CD8-positive, alpha-beta T cell (primary cell): ENCODE measurements at regions of chr19 and their contacts with region 1.

Region 1: GRCh38 chr19:29610563-29611271 is 4.6 kb downstream of the POP4 start:
- DNase-seq: peak; percentile 77 to 92 (median 86)
- ATAC-seq: peak; percentile 58
- H3K4me3 ChIP-seq: peak overlapping the region in 1 of 2 experiments; percentile 20
- H3K4me3 Mint-ChIP-seq: no peak overlapping the region
- H3K27ac ChIP-seq: peak overlapping the region in 1 of 2 experiments; percentile 62
- H3K27ac Mint-ChIP-seq: peak overlapping the region; percentile 42
- H3K4me1 ChIP-seq: peaks cover 19% of the 10 kb centered on the region
- H3K4me1 Mint-ChIP-seq: peaks cover 28% of the 10 kb centered on the region
- H3K27me3 ChIP-seq: no peaks in the 10 kb centered on the region
- H3K27me3 Mint-ChIP-seq: no peaks in the 10 kb centered on the region
- CTCF ChIP-seq: peak; percentile 88

Region 2: DNA sequence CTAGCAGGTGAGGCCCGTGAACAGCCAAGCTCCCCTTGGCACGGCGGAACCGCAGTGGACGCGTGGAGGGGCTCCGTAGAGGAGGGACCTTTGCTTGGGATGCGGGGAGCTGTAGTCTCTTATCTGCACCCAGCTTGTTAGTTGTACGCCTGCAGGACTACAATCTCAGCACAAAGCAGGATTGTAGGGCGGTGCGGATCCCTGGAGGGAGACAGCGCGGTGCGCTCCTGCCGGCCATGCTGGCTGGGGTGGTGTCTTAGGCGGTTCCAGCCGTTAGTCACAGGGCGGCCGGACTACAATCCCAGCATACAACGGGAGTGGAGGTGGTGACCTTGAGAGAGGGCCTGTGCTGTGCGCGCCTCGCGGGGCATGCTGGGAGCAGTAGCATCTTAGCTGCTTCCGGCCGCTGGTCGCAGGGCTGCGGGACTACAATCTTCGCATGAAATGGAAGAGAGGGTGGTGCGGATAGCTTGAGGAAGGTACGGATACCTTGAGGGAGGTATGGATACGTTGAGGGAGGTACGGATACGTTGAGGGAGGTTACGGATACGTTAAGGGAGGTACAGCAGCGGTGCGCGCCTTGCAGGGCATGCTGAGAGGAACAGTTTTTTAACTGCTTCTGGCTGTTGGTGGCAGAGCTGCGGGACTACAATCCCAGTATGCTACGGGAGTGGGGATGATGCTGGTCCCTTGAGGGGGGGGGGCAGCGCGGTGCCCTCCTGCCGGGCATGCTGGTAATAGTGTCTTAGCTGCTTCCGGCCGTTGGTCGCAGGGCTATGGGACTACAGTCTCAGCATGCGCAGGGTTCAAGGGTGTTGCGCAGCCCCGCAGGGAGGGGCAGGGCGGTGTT is 1816.8 kb before region 1 on chr19:
- CTCF ChIA-PET with region 1: no interaction called
- POLR2A ChIA-PET with region 1: interaction called, 4 read pairs
- intact Hi-C with region 1: loop called in 1 of 2 experiments (anchors 5 kb)
- DNase-seq: peak; percentile 77 to 95 (median 91)
- ATAC-seq: peak; percentile 90
- H3K4me3 ChIP-seq: peak overlapping the region; percentile 71 to 75
- H3K4me3 Mint-ChIP-seq: peak overlapping the region; percentile 93
- H3K27ac ChIP-seq: peak overlapping the region; percentile 74 to 81
- H3K27ac Mint-ChIP-seq: peak overlapping the region; percentile 95
- H3K4me1 ChIP-seq: peaks cover 18% of the 10 kb centered on the region
- H3K4me1 Mint-ChIP-seq: peaks cover 34% of the 10 kb centered on the region
- H3K27me3 ChIP-seq: no peaks in the 10 kb centered on the region
- H3K27me3 Mint-ChIP-seq: no peaks in the 10 kb centered on the region
- CTCF ChIP-seq: no peak

Region 3: DNA sequence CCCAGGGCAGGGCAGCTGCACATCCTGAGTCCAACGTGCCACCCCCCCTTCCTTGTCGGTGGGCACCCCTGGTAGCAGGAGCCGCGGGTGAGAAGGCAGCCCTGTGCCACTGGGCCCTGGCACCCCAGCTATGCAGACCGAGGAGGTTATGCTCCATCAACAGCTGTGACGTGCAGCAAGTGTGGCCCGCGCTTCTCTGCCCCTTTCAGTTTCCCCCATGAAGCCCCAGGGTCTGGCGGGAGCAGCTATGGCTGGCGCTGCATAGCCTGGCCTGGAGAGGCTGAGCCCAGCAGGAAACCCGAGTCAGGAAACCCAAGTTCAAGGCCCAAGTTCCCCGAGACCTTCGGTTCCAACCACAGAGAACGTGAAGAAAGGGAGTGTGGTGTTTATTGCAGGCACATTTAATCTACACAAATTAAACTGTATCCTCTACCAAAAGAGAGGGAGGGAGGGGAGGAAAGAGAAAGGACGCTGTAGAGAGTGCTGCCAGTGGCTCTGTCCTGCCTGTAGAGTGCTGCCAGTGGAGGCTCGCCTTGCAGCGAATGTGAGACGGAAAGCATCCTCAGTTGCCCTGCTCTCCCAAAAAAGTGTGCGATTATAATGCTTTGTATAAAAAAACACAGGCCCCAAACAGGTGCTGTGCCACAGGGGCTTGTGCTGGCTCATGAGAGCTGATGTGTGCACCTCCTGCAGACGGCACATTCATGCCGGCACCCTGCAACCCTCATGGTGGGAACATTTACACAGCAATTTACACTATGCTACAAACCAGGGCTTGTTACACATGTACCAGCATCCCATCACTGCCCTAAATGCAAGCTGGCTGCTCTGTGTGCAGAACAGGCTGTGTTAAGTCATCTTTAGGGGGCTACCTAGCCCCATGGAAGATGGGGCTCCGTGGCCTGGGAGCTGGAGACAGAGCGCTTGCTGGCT is 11.7 kb after region 1 on chr19:
- CTCF ChIA-PET with region 1: interaction called, 80 read pairs
- POLR2A ChIA-PET with region 1: interaction called, 24 read pairs
- intact Hi-C with region 1: no loop called
- DNase-seq: peak in 6 of 9 experiments; percentile 26 to 73 (median 57)
- ATAC-seq: peak; percentile 65
- H3K4me3 ChIP-seq: peak overlapping the region; percentile 1 to 13
- H3K4me3 Mint-ChIP-seq: peak overlapping the region; percentile 68
- H3K27ac ChIP-seq: peak overlapping the region; percentile 2 to 66
- H3K27ac Mint-ChIP-seq: peak overlapping the region; percentile 75
- H3K4me1 ChIP-seq: peaks cover 47% of the 10 kb centered on the region
- H3K4me1 Mint-ChIP-seq: peaks cover 46% of the 10 kb centered on the region
- H3K27me3 ChIP-seq: no peaks in the 10 kb centered on the region
- H3K27me3 Mint-ChIP-seq: no peaks in the 10 kb centered on the region
- CTCF ChIP-seq: no peak

Region 4: DNA sequence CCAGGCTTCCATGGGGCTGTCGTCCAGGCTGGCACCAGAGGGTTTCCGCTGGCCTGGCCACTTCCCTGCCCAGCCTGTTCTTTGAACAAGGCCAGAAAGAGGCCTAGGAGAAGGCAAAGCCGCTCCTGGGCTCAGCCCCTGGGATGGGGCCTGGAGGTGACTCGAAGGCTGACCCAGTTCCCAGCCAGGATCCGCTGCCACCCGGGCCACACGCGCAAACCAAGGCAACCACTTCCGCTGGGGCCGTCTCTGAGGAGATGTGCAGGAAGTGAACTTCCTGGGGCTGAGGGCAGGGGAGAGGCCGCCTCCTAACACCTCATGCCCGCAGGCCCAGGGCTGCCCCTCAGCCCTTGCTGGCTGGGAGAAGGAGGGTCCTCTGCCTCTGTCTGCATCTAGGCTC is 69.7 kb after region 1 on chr19:
- CTCF ChIA-PET with region 1: interaction called, 387 read pairs
- POLR2A ChIA-PET with region 1: interaction called, 19 read pairs
- intact Hi-C with region 1: no loop called
- DNase-seq: peak; percentile 67 to 94 (median 85)
- ATAC-seq: peak; percentile 83
- H3K4me3 ChIP-seq: peak overlapping the region; percentile 13 to 44
- H3K4me3 Mint-ChIP-seq: peak overlapping the region; percentile 71
- H3K27ac ChIP-seq: peak overlapping the region; percentile 26 to 71
- H3K27ac Mint-ChIP-seq: peak overlapping the region; percentile 86
- H3K4me1 ChIP-seq: peaks cover 74% of the 10 kb centered on the region
- H3K4me1 Mint-ChIP-seq: peaks cover 76% of the 10 kb centered on the region
- H3K27me3 ChIP-seq: no peaks in the 10 kb centered on the region
- H3K27me3 Mint-ChIP-seq: no peaks in the 10 kb centered on the region
- CTCF ChIP-seq: no peak

Region 5: DNA sequence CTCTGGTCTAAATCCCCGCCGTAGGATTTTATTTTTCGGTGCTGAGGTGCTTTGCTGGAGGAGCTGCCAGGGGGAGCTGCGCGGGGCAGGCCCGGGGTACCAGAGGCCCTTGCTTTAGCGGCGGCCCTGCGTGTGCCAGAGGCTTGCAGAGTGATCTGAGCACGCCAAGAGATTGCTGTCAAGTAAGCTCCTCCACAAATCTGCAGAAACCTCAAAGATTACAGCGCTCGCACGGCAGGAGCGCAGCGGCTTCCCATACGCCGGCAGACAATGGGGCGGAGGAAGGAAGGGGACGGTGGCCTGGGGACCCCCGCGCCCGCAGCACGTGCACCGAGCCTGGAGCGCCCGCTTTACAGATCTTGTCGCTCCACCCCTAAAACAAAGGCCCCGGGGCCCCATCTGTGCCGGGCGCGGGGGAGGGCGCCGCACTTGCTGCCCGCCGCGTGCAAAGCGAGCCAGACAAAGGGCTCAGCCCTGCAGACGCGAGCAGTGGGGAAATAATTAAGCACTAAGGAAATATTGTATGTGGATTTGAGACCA is 113.5 kb after region 1 on chr19:
- CTCF ChIA-PET with region 1: interaction called, 12 read pairs
- POLR2A ChIA-PET with region 1: interaction called, 11 read pairs
- intact Hi-C with region 1: no loop called
- DNase-seq: peak in 6 of 9 experiments; percentile 25 to 67 (median 54)
- ATAC-seq: peak; percentile 80
- H3K4me3 ChIP-seq: peak overlapping the region; percentile 36 to 59
- H3K4me3 Mint-ChIP-seq: peak overlapping the region; percentile 71
- H3K27ac ChIP-seq: no peak overlapping the region
- H3K27ac Mint-ChIP-seq: peak overlapping the region; percentile 46
- H3K4me1 ChIP-seq: peaks cover 12% of the 10 kb centered on the region
- H3K4me1 Mint-ChIP-seq: peaks cover 16% of the 10 kb centered on the region
- H3K27me3 ChIP-seq: no peaks in the 10 kb centered on the region
- H3K27me3 Mint-ChIP-seq: no peaks in the 10 kb centered on the region
- CTCF ChIP-seq: no peak

Region 6: GRCh38 chr19:29873024-29873800 is 262.5 kb after region 1 on chr19:
- CTCF ChIA-PET with region 1: interaction called, 5 read pairs
- POLR2A ChIA-PET with region 1: no interaction called
- intact Hi-C with region 1: loop called (anchors 2 to 10 kb)
- DNase-seq: peak; percentile 39 to 84 (median 67)
- ATAC-seq: peak; percentile 78
- H3K4me3 ChIP-seq: peak overlapping the region; percentile 18 to 63
- H3K4me3 Mint-ChIP-seq: peak overlapping the region; percentile 78
- H3K27ac ChIP-seq: no peak overlapping the region
- H3K27ac Mint-ChIP-seq: no peak overlapping the region
- H3K4me1 ChIP-seq: peaks cover 4% of the 10 kb centered on the region
- H3K4me1 Mint-ChIP-seq: peaks cover 8% of the 10 kb centered on the region
- H3K27me3 ChIP-seq: peaks cover 0 to 9% of the 10 kb centered on the region in 2 experiments
- H3K27me3 Mint-ChIP-seq: peaks cover 23% of the 10 kb centered on the region
- CTCF ChIP-seq: peak; percentile 94